ENCODE measurements at regions of chr7 and their contacts with region 1.

Region 1: DNA sequence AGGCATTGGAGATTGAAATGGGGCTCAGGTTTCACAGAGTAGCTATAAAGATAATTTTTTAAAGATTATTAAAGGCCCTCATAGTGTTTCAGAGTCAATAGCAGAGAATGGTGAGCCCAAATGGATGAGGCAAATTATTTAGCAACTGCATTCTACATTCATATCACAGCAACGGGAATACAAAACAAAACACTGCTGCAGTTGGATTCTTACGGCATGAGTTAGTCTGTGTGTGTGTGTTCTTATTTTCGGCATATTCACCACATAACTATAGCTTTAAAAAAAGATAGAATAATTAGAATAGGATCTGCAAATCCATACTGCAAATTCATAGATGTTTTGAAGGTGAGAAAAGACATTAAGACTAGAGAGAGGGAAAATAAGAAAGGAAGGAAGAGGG is 66.0 kb downstream of the SUGCT start:
- DNase-seq: no peak
- H3K4me3 ChIP-seq: no peak overlapping the region
- H3K4me3 Mint-ChIP-seq: no peak overlapping the region
- H3K27ac ChIP-seq: no peak overlapping the region
- H3K27ac Mint-ChIP-seq: no peak overlapping the region
- H3K4me1 ChIP-seq: no peaks in the 10 kb centered on the region
- H3K4me1 Mint-ChIP-seq: no peaks in the 10 kb centered on the region
- H3K27me3 ChIP-seq: no peaks in the 10 kb centered on the region
- H3K27me3 Mint-ChIP-seq: peaks cover 0 to 3% of the 10 kb centered on the region in 2 donors

Region 2: DNA sequence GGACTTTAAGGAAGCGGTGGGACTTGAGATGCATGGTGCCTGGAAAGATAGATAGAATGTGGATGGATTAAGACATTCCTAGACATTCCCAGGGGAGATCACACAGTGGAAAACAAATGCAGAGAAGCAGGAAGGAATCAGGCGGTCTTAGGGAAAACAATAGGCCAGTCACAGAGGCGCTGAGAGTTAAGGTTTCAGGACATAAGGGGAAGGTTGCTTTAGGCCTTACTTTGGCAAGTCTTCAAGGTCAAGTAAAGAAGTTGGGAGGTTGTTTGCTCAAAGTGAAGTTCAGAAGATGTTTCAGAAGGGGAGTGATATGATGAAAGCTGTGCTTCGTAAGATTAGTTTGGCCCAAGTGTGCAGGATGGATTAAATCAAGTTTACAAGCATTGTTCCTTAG is 43.4 kb after region 1 on chr7:
- CTCF ChIA-PET with region 1: no interaction called
- POLR2A ChIA-PET with region 1: no interaction called
- intact Hi-C with region 1: loop called (anchors 1 kb)
- DNase-seq: no peak
- H3K4me3 ChIP-seq: no peak overlapping the region
- H3K4me3 Mint-ChIP-seq: no peak overlapping the region
- H3K27ac ChIP-seq: no peak overlapping the region
- H3K27ac Mint-ChIP-seq: no peak overlapping the region
- H3K4me1 ChIP-seq: no peaks in the 10 kb centered on the region
- H3K4me1 Mint-ChIP-seq: no peaks in the 10 kb centered on the region
- H3K27me3 ChIP-seq: no peaks in the 10 kb centered on the region
- H3K27me3 Mint-ChIP-seq: no peaks in the 10 kb centered on the region

Region 3: DNA sequence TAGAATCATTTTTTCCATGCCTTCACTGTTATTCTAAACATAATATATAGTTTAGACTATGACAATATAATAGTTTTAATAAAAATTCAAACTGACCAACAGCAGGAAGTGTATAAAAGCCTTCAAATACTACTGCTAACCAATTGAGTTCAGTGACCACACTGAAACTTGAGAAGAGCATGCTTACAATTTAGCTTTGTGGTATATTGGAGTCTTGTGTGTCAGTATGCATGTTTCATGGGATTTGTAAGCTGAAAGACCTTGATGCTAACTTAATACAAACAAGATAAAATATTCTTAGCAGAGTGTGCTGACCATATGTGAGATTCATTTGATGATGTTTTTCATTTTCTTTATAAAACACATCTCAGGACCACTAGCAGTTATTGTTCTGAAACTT is 329.5 kb after region 1 on chr7:
- CTCF ChIA-PET with region 1: no interaction called
- POLR2A ChIA-PET with region 1: no interaction called
- intact Hi-C with region 1: no loop called
- DNase-seq: no peak
- H3K4me3 ChIP-seq: no peak overlapping the region
- H3K4me3 Mint-ChIP-seq: no peak overlapping the region
- H3K27ac ChIP-seq: no peak overlapping the region
- H3K27ac Mint-ChIP-seq: no peak overlapping the region
- H3K4me1 ChIP-seq: no peaks in the 10 kb centered on the region
- H3K4me1 Mint-ChIP-seq: no peaks in the 10 kb centered on the region
- H3K27me3 ChIP-seq: no peaks in the 10 kb centered on the region
- H3K27me3 Mint-ChIP-seq: no peaks in the 10 kb centered on the region